ENCODE measurements at regions of chr3 and their contacts with region 1.

Region 1: DNA sequence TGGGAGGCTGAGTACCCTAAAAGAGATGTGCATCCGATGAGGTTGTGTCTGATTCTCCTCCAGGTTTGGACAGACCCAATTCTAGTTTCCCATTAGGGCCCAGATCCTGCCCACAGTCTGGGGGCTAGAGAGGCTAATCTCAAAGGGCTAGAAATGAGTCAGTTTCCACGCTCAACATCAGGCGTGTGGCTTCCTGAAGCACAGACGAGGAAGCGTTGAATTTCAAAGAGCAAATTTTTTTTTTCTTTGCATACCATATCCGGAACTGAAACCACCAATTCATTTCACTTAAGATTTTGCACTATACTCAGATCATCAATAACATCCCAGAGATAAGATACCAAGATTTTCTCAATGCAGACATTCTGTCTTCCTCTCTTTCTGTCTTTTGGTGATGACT is 173.8 kb upstream of the BCL6 start:
- DNase-seq: peak; percentile 91
- H3K4me3 Mint-ChIP-seq: peak overlapping the region; percentile 76
- H3K27ac Mint-ChIP-seq: peak overlapping the region; percentile 96
- H3K4me1 Mint-ChIP-seq: peaks cover 71% of the 10 kb centered on the region
- H3K27me3 Mint-ChIP-seq: no peaks in the 10 kb centered on the region

Region 2: DNA sequence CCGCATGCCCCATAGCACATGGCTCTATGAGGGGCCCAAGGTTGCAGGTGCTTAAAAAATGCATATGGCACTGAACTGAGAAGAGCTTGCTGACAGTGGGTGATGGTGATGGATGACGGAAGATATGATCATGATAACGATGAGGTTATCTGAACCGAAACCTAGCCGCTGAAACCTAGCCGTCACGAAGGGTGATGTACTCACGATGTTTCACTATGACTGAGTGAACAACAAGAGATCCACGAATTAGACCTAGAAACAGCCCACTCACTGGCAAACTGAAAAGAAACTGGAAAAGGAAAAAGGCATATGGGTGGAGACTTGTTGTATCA is 116.2 kb before region 1 on chr3:
- intact Hi-C with region 1: loop called (anchors 1 kb)
- DNase-seq: peak; percentile 94
- H3K4me3 Mint-ChIP-seq: peak overlapping the region; percentile 36
- H3K27ac Mint-ChIP-seq: peak overlapping the region; percentile 97
- H3K4me1 Mint-ChIP-seq: peaks cover 90% of the 10 kb centered on the region
- H3K27me3 Mint-ChIP-seq: no peaks in the 10 kb centered on the region

Region 3: DNA sequence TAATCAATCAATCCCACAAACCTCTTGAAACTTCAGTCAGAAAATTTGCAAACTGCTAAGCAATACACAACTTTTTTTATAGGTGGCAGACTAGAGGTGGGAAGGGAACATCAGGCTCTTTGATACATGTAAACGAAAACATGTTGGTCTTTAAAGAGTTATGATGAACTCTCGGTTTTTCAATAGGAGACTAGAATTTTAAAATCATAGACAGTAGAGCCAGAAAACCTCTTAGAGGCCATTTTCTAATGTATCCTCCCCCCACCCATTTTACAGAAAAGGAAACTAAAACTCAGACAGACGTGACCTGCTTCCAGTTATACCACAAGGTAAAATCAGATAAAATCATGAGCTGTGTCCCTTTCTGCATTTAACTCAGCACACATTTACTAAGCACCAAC is 55.8 kb after region 1 on chr3:
- intact Hi-C with region 1: loop called (anchors 1 kb)
- DNase-seq: peak; percentile 73
- H3K4me3 Mint-ChIP-seq: peak overlapping the region; percentile 73
- H3K27ac Mint-ChIP-seq: peak overlapping the region; percentile 94
- H3K4me1 Mint-ChIP-seq: peaks cover 63% of the 10 kb centered on the region
- H3K27me3 Mint-ChIP-seq: no peaks in the 10 kb centered on the region

Region 4: DNA sequence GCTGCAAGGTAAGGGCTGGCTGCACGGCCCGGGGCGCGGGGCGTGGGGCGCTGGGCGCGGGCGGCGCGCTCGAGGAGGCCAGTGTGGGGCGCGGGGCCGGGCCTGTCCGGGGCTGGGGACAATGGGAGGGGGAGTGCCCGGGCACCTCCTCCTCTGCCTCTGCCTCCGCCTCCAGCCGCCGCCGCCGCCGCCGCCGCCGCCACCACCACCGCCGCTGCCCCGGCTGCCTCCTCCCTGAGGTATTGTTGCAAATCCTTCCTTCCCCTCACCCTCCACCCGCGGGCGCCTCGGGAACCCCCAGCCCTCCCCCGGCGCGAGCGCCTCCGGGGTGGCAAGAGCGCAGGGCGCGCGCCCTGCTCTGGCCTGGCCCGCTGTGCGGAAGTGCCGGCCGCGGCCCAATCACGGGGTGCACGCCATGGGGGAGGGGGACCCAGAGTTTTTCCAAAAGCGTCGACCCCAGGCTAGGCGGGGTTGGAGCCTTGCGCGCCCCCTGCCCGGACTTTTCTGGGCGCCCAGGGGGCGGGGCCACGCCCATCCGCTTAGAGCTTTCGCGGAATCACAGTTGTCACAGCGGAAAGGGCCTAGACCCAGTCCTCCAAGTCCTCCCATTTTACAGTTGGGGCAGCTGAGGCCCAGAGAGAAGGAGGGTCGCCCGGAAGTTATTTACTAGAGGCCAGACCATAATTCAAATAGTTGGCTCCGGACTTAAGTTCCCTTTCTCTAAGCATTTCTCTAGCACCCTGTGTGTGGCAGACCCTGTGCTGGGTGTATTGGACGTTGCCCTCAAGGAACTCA is 235.2 kb after region 1 on chr3 and contains the start of gene LPP:
- intact Hi-C with region 1: loop called (anchors 2 kb)
- DNase-seq: peak; percentile 97
- H3K4me3 Mint-ChIP-seq: peak within 1 kb of the TSS; percentile 86
- H3K27ac Mint-ChIP-seq: peak within 1 kb of the TSS; percentile 90
- H3K4me1 Mint-ChIP-seq: peaks cover 58% of the 10 kb centered on the region
- H3K27me3 Mint-ChIP-seq: no peaks in the 10 kb centered on the region
- total RNA-seq, gene LPP: 39.5 and 41.4 TPM in 2 replicates

Region 5: GRCh38 chr3:188320757-188321156 is 401.7 kb after region 1 on chr3:
- intact Hi-C with region 1: loop called (anchors 5 kb)
- DNase-seq: no peak
- H3K4me3 Mint-ChIP-seq: no peak overlapping the region
- H3K27ac Mint-ChIP-seq: peak overlapping the region; percentile 29
- H3K4me1 Mint-ChIP-seq: peaks cover 48% of the 10 kb centered on the region
- H3K27me3 Mint-ChIP-seq: peaks cover 4% of the 10 kb centered on the region

Region 6: DNA sequence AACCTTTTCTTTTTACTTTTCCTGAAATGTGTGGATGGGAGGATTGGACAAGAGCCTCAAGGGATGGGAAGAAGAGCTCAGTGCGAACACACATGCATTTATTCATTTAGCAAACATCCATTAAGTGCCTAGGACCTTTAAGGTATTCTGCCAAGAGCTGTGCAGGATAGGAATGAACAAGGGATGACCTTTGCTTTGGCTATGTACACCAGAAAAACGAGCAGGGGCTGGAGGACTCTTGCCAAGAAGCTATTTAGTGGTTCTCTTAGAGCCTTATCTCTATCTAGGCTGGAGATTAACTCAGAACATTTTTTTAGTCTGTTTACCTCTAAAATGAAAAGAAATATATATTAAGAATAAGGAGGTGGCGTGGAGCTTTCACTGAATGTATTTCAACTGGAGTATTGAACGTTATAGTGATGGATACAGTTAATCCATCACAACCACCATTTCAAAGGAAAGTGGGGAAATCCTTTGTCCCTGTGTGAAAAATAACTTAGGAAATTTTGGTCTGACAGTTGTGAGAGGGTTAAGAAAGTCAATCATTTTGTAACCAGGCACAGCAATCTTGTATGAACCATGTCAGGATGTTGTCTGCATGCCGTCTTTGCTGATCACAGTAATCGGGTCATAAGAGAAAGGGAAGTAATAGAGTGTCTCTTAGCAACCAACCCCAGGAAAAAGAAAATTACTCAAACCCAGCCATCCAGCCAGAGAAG is 513.9 kb after region 1 on chr3:
- intact Hi-C with region 1: no loop called
- DNase-seq: peak; percentile 63
- H3K4me3 Mint-ChIP-seq: peak overlapping the region; percentile 69
- H3K27ac Mint-ChIP-seq: peak overlapping the region; percentile 82
- H3K4me1 Mint-ChIP-seq: peaks cover 35% of the 10 kb centered on the region
- H3K27me3 Mint-ChIP-seq: no peaks in the 10 kb centered on the region

Region 7: GRCh38 chr3:188752850-188753249 is 833.8 kb after region 1 on chr3:
- intact Hi-C with region 1: loop called (anchors 1 kb)
- DNase-seq: no peak
- H3K4me3 Mint-ChIP-seq: no peak overlapping the region
- H3K27ac Mint-ChIP-seq: peak overlapping the region; percentile 2
- H3K4me1 Mint-ChIP-seq: peaks cover 21% of the 10 kb centered on the region
- H3K27me3 Mint-ChIP-seq: peaks cover 2% of the 10 kb centered on the region

Region 8: DNA sequence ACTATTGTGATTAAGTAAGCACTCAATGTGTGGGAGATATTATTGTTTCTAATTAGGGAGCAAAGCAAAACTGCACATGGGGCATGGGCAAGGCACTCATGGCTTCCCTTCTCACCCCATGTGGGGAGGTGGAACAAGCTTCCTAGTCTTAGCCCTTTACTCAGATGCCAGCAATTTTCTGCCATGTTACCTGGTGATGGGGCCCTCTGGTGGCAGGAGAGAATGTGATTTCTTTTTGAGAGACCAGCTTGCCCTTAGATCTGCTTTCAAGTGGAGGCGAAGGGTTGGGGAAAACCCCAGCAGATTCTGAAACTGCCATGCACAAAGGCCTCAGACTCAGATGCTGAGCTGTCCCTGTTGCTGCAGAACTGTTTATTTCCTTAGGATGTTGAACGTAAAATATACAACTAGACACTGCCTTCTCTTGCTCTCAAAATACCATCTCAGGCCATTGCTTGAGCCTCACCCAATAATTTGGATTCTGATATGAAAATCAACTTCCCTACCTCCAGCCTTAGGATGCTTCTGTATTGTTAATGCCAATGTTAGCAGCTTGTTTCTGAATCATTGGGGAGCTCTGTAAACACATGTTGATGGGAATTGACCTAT is 1122.5 kb after region 1 on chr3:
- intact Hi-C with region 1: loop called (anchors 5 kb)
- DNase-seq: peak; percentile 94
- H3K4me3 Mint-ChIP-seq: peak overlapping the region; percentile 48
- H3K27ac Mint-ChIP-seq: peak overlapping the region; percentile 79
- H3K4me1 Mint-ChIP-seq: peaks cover 54% of the 10 kb centered on the region
- H3K27me3 Mint-ChIP-seq: no peaks in the 10 kb centered on the region